Activated CD4-positive, alpha-beta T cell treated with anti-CD3 and anti-CD28 coated beads for 36 hours (primary cell): ENCODE measurements at regions of chr2 and their contacts with region 1.

Region 1: DNA sequence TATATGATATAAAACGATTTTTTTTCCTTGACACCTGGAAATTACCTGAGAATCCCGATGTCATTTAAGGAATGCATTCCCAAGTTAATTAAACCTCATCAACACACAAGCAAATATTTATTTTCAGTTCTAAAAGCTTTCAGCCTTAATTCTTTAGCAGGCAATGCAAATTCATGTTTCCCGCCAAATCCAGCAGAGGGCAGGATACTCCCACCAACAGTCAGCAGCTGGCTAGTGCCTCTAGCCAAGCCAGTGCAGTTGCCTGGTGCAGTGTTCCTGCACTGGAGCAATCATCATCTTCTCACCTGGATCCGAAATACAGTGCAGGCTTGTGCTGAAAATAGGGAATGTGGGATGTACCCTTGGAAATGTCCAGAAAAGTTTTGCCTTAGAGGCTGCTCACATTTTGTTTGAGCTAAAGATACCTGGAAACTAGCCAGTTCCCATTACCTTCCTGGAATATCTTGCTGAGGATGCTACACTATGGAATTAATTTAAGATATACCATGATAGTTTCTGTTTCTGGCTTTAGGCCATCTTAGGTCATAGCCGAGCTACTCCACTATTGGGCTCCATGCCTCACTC is 48.4 kb upstream of the CYTIP start:
- DNase-seq: peak; percentile 84
- ATAC-seq: peak; percentile 90
- H3K4me3 Mint-ChIP-seq: no peak overlapping the region
- H3K27ac Mint-ChIP-seq: no peak overlapping the region
- H3K4me1 Mint-ChIP-seq: peaks cover 68% of the 10 kb centered on the region
- H3K27me3 Mint-ChIP-seq: no peaks in the 10 kb centered on the region

Region 2: DNA sequence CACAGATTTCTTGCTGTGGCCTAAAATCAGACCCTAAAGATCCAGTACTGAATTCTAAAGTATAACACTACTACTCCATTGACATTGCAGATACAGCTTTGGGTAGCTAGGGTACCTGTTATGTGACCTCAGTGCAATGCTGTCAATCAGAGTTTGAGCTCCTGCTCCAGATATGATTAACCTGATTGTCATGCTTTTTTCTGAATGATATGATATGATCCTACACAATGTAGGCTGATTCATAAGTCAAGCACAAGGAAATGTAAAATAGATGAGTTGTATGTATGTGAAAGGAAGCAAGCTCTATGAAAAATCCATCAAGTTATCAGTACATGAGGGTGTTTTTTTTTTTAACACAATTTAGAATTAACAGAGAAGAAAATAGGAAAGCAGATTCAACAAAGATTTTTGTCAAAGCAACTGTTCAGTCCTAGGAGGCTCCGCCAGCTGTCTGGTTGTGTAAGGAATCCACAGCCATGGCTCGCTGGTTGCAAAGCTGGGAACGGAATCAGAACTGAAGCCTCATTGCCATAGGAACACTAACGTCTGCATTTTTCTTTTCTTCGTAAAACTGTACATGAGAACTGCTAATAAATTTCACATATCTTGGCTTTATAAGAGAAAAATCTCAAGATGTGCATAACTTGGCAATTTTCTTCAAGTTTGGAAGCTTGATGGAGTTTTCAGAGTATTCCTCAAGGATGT is 1212.7 kb before region 1 on chr2:
- CTCF ChIA-PET with region 1: no interaction called
- POLR2A ChIA-PET with region 1: no interaction called
- intact Hi-C with region 1: no loop called
- DNase-seq: no peak
- ATAC-seq: no peak
- H3K4me3 Mint-ChIP-seq: no peak overlapping the region
- H3K27ac Mint-ChIP-seq: no peak overlapping the region
- H3K4me1 Mint-ChIP-seq: no peaks in the 10 kb centered on the region
- H3K27me3 Mint-ChIP-seq: peaks cover 13% of the 10 kb centered on the region

Region 3: GRCh38 chr2:157460384-157460837 is 31.9 kb before region 1 on chr2:
- CTCF ChIA-PET with region 1: interaction called, 11 read pairs
- POLR2A ChIA-PET with region 1: interaction called, 4 read pairs
- intact Hi-C with region 1: no loop called
- DNase-seq: no peak
- ATAC-seq: no peak
- H3K4me3 Mint-ChIP-seq: peak overlapping the region; percentile 10
- H3K27ac Mint-ChIP-seq: peak overlapping the region; percentile 72
- H3K4me1 Mint-ChIP-seq: peaks cover 93% of the 10 kb centered on the region
- H3K27me3 Mint-ChIP-seq: no peaks in the 10 kb centered on the region

Region 4: GRCh38 chr2:157596992-157597681 is 104.9 kb after region 1 on chr2:
- CTCF ChIA-PET with region 1: interaction called, 13 read pairs
- POLR2A ChIA-PET with region 1: no interaction called
- intact Hi-C with region 1: loop called (anchors 1 to 2 kb)
- DNase-seq: peak; percentile 81
- ATAC-seq: peak; percentile 88
- H3K4me3 Mint-ChIP-seq: peak overlapping the region; percentile 59
- H3K27ac Mint-ChIP-seq: no peak overlapping the region
- H3K4me1 Mint-ChIP-seq: peaks cover 8% of the 10 kb centered on the region
- H3K27me3 Mint-ChIP-seq: peaks cover 5% of the 10 kb centered on the region

Region 5: GRCh38 chr2:157751462-157752058 is 259.3 kb after region 1 on chr2:
- CTCF ChIA-PET with region 1: interaction called, 7 read pairs
- POLR2A ChIA-PET with region 1: no interaction called
- intact Hi-C with region 1: loop called (anchors 5 kb)
- DNase-seq: peak; percentile 47
- ATAC-seq: peak; percentile 44
- H3K4me3 Mint-ChIP-seq: no peak overlapping the region
- H3K27ac Mint-ChIP-seq: no peak overlapping the region
- H3K4me1 Mint-ChIP-seq: peaks cover 10% of the 10 kb centered on the region
- H3K27me3 Mint-ChIP-seq: no peaks in the 10 kb centered on the region

Region 6: DNA sequence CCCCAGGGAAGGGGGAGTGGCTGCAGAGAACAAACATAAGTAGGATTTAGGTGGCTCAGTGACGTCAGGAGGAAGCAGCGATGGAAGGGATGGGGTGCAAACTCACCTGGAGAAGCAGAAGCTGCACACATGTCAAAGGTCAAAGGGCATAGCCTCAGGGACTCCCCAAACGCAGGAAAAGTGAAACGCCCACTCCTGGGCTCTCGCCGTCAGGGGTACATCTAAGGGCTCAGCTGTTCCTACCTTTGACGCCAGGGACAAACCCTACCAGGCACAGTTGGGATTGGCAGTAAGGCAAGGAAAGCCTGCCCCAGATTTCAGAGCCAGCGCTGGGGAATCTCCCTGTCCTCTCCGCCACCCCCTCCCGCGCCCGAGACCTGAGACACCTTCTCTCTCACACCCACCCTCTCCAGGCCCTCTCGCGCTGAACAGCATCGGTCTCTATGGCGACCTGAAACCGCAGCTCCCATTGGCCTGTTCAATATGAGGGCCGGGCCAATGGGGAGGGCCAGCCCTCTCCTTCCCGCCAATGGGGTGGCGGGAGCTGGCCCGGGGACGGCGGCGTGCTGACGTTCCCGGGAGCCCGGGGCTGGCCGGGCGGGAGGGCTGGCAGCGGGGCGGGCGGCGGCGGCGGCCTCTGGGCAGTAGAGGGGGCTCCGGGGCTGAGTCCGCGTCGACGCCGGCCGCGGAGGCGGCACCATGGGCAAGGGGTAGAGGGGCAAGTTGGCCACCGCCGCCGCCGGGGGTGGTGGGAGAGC is 964.2 kb after region 1 on chr2 and contains the starts of genes CCDC148 and PKP4:
- CTCF ChIA-PET with region 1: no interaction called
- POLR2A ChIA-PET with region 1: no interaction called
- intact Hi-C with region 1: loop called in 1 of 2 experiments (anchors 10 kb)
- DNase-seq: peak; percentile 95
- ATAC-seq: peak; percentile 97
- H3K4me3 Mint-ChIP-seq: peak within 1 kb of the TSS; percentile 92
- H3K27ac Mint-ChIP-seq: peak within 1 kb of the TSS; percentile 72
- H3K4me1 Mint-ChIP-seq: peaks cover 25% of the 10 kb centered on the region
- H3K27me3 Mint-ChIP-seq: peaks cover 5% of the 10 kb centered on the region
- total RNA-seq, gene CCDC148: 0.23 to 0.26 TPM
- total RNA-seq, gene PKP4: 39.2 to 58.4 TPM